Naive thymus-derived CD8-positive, alpha-beta T cell (primary cell): ENCODE measurements at regions of chr16 and their contacts with region 1.

Region 1: GRCh38 chr16:71484006-71484893 is 4.9 kb downstream of the ZNF19 start:
- DNase-seq: peak; percentile 61 to 91 (median 86)
- ATAC-seq: peak; percentile 82 to 88
- H3K4me3 Mint-ChIP-seq: peak overlapping the region; percentile 86 to 93 (median 92)
- H3K27ac Mint-ChIP-seq: peak overlapping the region; percentile 89 to 98 (median 96)
- H3K4me1 Mint-ChIP-seq: peaks cover 16 to 21% (median 20%) of the 10 kb centered on the region in 4 donors
- H3K27me3 Mint-ChIP-seq: peaks cover 0 to 4% (median 0%) of the 10 kb centered on the region in 5 donors

Region 2: DNA sequence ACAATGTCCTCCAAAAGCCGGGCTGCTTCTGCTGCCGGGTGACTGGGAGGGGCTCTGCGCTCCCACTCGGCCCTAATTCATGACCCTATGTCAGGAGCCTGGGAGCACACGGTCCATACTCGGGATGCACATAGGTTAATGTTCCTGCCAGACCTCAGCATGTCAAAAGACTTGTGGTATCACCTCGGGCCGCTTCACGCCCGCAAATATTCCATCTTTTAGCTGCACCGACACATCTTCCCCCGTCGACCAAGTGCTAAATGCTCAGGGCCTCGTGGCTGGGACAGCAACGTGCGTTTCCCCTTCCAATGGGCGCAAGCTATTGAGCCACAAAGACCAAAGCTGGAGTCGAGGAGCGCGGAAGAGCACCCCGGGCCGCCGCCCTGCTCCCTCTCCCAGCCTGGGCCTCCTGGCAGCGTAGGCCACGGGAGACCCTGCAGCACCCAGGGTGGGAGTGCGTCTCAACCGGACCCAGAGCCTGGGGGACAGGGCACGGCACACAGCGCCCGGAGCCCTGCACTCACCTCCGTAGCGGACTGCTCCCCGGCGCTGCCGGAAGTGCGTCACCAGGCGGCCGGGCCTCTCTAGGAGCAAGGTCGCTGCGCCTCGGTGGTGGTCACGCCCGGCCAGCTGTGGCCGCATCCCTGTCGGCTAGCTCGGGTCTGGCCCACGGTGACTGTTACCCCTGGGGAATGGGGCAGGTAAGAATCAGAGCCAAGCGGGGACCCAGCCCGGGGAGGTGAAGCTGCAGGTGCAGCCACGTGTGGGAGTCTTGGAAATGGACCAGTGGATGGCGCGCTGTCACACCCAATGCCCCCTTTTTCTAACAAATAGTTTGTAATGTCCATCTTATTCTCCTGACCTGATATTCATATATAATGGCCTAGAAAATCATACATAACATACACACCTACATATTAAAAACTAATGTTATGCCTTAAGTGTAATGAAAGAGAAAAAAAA is 22.3 kb before region 1 on chr16 and contains the start of gene ZNF23:
- POLR2A ChIA-PET with region 1: interaction called, 30 read pairs
- DNase-seq: peak; percentile 55 to 85 (median 72)
- ATAC-seq: peak; percentile 95 to 96
- H3K4me3 Mint-ChIP-seq: peak within 1 kb of the TSS; percentile 90 to 99 (median 96)
- H3K27ac Mint-ChIP-seq: peak within 1 kb of the TSS; percentile 88 to 99 (median 98)
- H3K4me1 Mint-ChIP-seq: peaks cover 15 to 39% (median 29%) of the 10 kb centered on the region in 4 donors
- H3K27me3 Mint-ChIP-seq: no peaks in the 10 kb centered on the region
- polyA plus RNA-seq, gene ZNF23: 8.3 to 9.6 (median 8.4) TPM

Region 3: DNA sequence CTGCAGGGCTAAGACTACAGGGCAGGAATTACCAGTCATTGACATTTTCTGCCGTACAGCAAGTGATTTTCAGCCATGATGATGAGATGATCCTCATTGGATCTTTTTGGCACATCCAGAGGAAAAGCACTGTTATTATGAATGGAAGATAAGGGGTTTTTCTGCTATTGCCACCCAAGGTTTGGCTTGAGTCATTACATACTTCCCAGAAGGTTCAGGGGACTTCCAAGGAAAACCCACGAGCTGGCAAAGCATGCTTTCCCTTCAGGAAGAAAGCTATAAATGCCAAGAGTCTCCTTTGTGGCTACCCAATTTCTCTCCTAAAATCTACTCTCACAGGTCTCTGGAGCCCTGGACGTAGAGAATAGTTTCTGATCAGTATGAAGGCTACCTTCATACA is 48.1 kb after region 1 on chr16:
- POLR2A ChIA-PET with region 1: no interaction called
- DNase-seq: no peak
- ATAC-seq: no peak
- H3K4me3 Mint-ChIP-seq: no peak overlapping the region
- H3K27ac Mint-ChIP-seq: no peak overlapping the region
- H3K4me1 Mint-ChIP-seq: no peaks in the 10 kb centered on the region
- H3K27me3 Mint-ChIP-seq: peaks cover 2 to 13% (median 6%) of the 10 kb centered on the region in 5 donors